ENCODE measurements at regions of chr14 and their contacts with region 1.

Region 1: DNA sequence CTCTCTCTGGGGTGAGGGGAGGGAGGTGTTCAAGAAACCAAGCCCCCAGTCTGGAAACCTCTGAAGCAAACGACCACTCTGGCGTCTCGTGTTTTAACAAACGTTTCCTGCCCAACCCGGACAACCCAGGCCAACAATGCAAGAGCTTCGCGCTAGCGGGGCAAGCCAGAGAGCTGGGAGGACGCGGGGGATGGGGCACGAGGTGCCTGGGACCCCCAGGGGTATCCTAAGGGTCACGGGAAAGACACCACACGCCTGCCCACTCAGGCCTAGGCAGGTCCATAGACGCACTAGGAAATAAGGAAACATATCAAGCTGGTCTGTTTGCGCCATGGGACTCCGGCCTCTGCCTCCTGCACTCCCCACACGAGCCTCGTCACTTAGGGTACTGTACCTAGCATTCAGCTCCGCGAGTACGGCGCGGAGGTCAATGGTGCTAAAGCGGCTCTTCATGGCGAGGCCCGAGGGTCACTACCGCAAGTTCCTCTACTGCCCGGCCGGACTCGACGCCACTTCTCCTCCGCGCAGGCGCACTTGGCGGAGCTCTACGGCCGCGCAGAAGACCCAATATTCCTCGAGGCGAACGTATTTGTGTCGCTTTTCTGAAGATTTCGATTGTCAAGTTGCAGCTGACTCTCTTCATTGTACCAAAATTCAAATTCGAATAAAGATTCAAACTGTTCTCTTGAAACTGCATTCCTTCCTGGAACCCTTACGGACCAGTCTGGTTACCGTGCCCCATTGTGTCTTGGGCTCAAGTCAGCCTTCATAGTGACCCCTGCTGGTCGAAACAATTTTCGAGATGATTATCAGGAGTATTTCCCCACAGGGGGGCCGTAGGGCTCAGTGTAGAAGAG is at the start of gene NEMF:
- DNase-seq: peak; percentile 94
- ATAC-seq: peak; percentile 84
- H3K4me3 ChIP-seq: peak within 1 kb of the TSS; percentile 78 to 99 (median 99)
- H3K4me3 Mint-ChIP-seq: peak within 1 kb of the TSS; percentile 98
- H3K27ac ChIP-seq: peak within 1 kb of the TSS; percentile 72 to 88
- H3K27ac Mint-ChIP-seq: peak within 1 kb of the TSS; percentile 98
- H3K4me1 ChIP-seq: peaks cover 20 to 31% of the 10 kb centered on the region in 2 donors
- H3K4me1 Mint-ChIP-seq: peaks cover 44% of the 10 kb centered on the region
- H3K27me3 ChIP-seq: no peaks in the 10 kb centered on the region
- H3K27me3 Mint-ChIP-seq: no peaks in the 10 kb centered on the region
- CTCF ChIP-seq: peak; percentile 86
- total RNA-seq, gene NEMF: 127 and 146 TPM in 2 replicates

Region 2: DNA sequence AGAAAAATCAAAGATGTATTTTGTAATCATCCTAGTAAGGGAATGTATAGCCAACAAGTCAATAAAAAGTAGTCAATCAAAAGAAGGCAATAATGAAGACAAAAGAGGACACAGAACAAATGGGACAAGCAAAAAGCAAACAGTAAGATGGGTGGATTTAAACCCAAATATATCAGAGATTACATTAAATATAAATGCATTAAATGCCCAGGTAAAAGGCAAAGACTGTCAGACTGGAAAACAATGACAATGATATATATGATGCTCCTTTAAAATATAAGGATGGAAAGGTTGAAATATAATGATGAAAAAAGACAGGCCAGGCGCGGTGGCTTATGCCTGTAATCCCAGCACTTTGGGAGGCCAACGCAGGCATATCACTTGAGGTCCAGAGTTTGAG is 35.7 kb before region 1 on chr14:
- CTCF ChIA-PET with region 1: no interaction called
- POLR2A ChIA-PET with region 1: no interaction called
- intact Hi-C with region 1: no loop called
- DNase-seq: no peak
- ATAC-seq: no peak
- H3K4me3 ChIP-seq: no peak overlapping the region
- H3K4me3 Mint-ChIP-seq: no peak overlapping the region
- H3K27ac ChIP-seq: no peak overlapping the region
- H3K27ac Mint-ChIP-seq: no peak overlapping the region
- H3K4me1 ChIP-seq: no peaks in the 10 kb centered on the region
- H3K4me1 Mint-ChIP-seq: no peaks in the 10 kb centered on the region
- H3K27me3 ChIP-seq: no peaks in the 10 kb centered on the region
- H3K27me3 Mint-ChIP-seq: no peaks in the 10 kb centered on the region
- CTCF ChIP-seq: no peak

Region 3: GRCh38 chr14:50116181-50116956 is 263.8 kb after region 1 on chr14 and contains the start of gene VCPKMT:
- CTCF ChIA-PET with region 1: interaction called, 26 read pairs
- POLR2A ChIA-PET with region 1: interaction called, 11 read pairs
- intact Hi-C with region 1: loop called (anchors 1 kb)
- DNase-seq: peak; percentile 97
- ATAC-seq: peak; percentile 97
- H3K4me3 ChIP-seq: peak within 1 kb of the TSS; percentile 69 to 92 (median 87)
- H3K4me3 Mint-ChIP-seq: peak within 1 kb of the TSS; percentile 98
- H3K27ac ChIP-seq: peak within 1 kb of the TSS; percentile 92 to 99
- H3K27ac Mint-ChIP-seq: peak within 1 kb of the TSS; percentile 98
- H3K4me1 ChIP-seq: peaks cover 44 to 45% of the 10 kb centered on the region in 2 donors
- H3K4me1 Mint-ChIP-seq: peaks cover 45% of the 10 kb centered on the region
- H3K27me3 ChIP-seq: no peaks in the 10 kb centered on the region
- H3K27me3 Mint-ChIP-seq: no peaks in the 10 kb centered on the region
- CTCF ChIP-seq: no peak
- total RNA-seq, gene VCPKMT: 22.8 and 27.1 TPM in 2 replicates

Region 4: GRCh38 chr14:51357250-51357649 is 1504.7 kb after region 1 on chr14:
- CTCF ChIA-PET with region 1: no interaction called
- POLR2A ChIA-PET with region 1: no interaction called
- intact Hi-C with region 1: no loop called
- DNase-seq: no peak
- ATAC-seq: no peak
- H3K4me3 ChIP-seq: no peak overlapping the region
- H3K4me3 Mint-ChIP-seq: no peak overlapping the region
- H3K27ac ChIP-seq: no peak overlapping the region
- H3K27ac Mint-ChIP-seq: no peak overlapping the region
- H3K4me1 ChIP-seq: no peaks in the 10 kb centered on the region
- H3K4me1 Mint-ChIP-seq: no peaks in the 10 kb centered on the region
- H3K27me3 ChIP-seq: no peaks in the 10 kb centered on the region
- H3K27me3 Mint-ChIP-seq: peaks cover 24% of the 10 kb centered on the region
- CTCF ChIP-seq: no peak

Measured in B cell (primary cell).